HepG2 (cell line): ENCODE measurements at regions of chr2 and their contacts with region 1.

Region 1: GRCh38 chr2:19120941-19121750 is 237.3 kb downstream of the OSR1 start:
- DNase-seq: peak; percentile 26
- ATAC-seq: peak; percentile 65
- H3K4me3 ChIP-seq: no peak overlapping the region
- H3K27ac ChIP-seq: no peak overlapping the region
- H3K4me1 ChIP-seq: peaks cover 27% of the 10 kb centered on the region
- H3K27me3 ChIP-seq: no peaks in the 10 kb centered on the region
- CTCF ChIP-seq: no peak
- EP300 ChIP-seq: no peak
- POLR2A ChIP-seq: no peak
- RAD21 ChIP-seq: no peak

Region 2: GRCh38 chr2:19140596-19141219 is 19.6 kb after region 1 on chr2:
- CTCF ChIA-PET with region 1: no interaction called
- POLR2A ChIA-PET with region 1: no interaction called
- in situ Hi-C with region 1: no loop called
- intact Hi-C with region 1: loop called (anchors 1 kb)
- DNase-seq: peak; percentile 99
- ATAC-seq: peak; percentile 100
- H3K4me3 ChIP-seq: no peak overlapping the region
- H3K27ac ChIP-seq: no peak overlapping the region
- H3K4me1 ChIP-seq: peaks cover 19% of the 10 kb centered on the region
- H3K27me3 ChIP-seq: no peaks in the 10 kb centered on the region
- CTCF ChIP-seq: no peak
- EP300 ChIP-seq: peak; percentile 75 to 93
- POLR2A ChIP-seq: no peak
- RAD21 ChIP-seq: no peak